ENCODE measurements at regions of chr16 and their contacts with region 1.

Region 1: GRCh38 chr16:87387942-87388817 is 4.0 kb upstream of the MAP1LC3B start:
- DNase-seq: peak; percentile 90 to 96 (median 96)
- ATAC-seq: peak; percentile 71 to 88 (median 82)
- H3K4me3 ChIP-seq: peak overlapping the region in 9 of 12 donors; percentile 22 to 42 (median 29)
- H3K27ac ChIP-seq: peak overlapping the region; percentile 80 to 96 (median 90)
- H3K4me1 ChIP-seq: peaks cover 6 to 45% (median 29%) of the 10 kb centered on the region in 12 donors
- H3K27me3 ChIP-seq: no peaks in the 10 kb centered on the region
- CTCF ChIP-seq: no peak
- POLR2A ChIP-seq: peak in 1 of 2 donors; percentile 66

Region 2: GRCh38 chr16:87316923-87317749 is 71.0 kb before region 1 on chr16 and contains the start of gene C16orf95:
- intact Hi-C with region 1: loop called in 9 of 10 experiments (anchors 1 to 5 kb)
- DNase-seq: peak; percentile 96 to 97 (median 97)
- ATAC-seq: peak; percentile 97 to 99 (median 98)
- H3K4me3 ChIP-seq: peak within 1 kb of the TSS; percentile 67 to 100 (median 85)
- H3K27ac ChIP-seq: peak within 1 kb of the TSS; percentile 79 to 97 (median 91)
- H3K4me1 ChIP-seq: peaks cover 0 to 15% (median 8%) of the 10 kb centered on the region in 12 donors
- H3K27me3 ChIP-seq: no peaks in the 10 kb centered on the region
- CTCF ChIP-seq: peak; percentile 37 to 77 (median 64)
- POLR2A ChIP-seq: peak; percentile 32 to 91
- total RNA-seq, gene C16orf95: 0.91 to 4.5 (median 3.3) TPM

Region 3: GRCh38 chr16:87540945-87541877 is 153.0 kb after region 1 on chr16:
- intact Hi-C with region 1: loop called in 1 of 10 experiments (anchors 5 kb)
- DNase-seq: peak; percentile 44 to 80 (median 70)
- ATAC-seq: peak; percentile 47 to 79 (median 65)
- H3K4me3 ChIP-seq: peak overlapping the region in 8 of 12 donors; percentile 11 to 48 (median 25)
- H3K27ac ChIP-seq: peak overlapping the region; percentile 34 to 69 (median 56)
- H3K4me1 ChIP-seq: peaks cover 0 to 26% (median 11%) of the 10 kb centered on the region in 12 donors
- H3K27me3 ChIP-seq: peaks cover 0 to 7% (median 0%) of the 10 kb centered on the region in 9 donors
- CTCF ChIP-seq: no peak
- POLR2A ChIP-seq: no peak

Region 4: GRCh38 chr16:87713451-87714229 is 325.5 kb after region 1 on chr16:
- intact Hi-C with region 1: no loop called
- DNase-seq: no peak
- ATAC-seq: no peak
- H3K4me3 ChIP-seq: no peak overlapping the region
- H3K27ac ChIP-seq: no peak overlapping the region
- H3K4me1 ChIP-seq: peaks cover 0 to 7% (median 0%) of the 10 kb centered on the region in 12 donors
- H3K27me3 ChIP-seq: no peaks in the 10 kb centered on the region
- CTCF ChIP-seq: no peak
- POLR2A ChIP-seq: no peak

Region 5: GRCh38 chr16:87765776-87766484 is 377.8 kb after region 1 on chr16 and contains the start of gene KLHDC4:
- intact Hi-C with region 1: loop called in 5 of 10 experiments (anchors 5 to 10 kb)
- DNase-seq: peak; percentile 89 to 93 (median 91)
- ATAC-seq: peak; percentile 81 to 96 (median 94)
- H3K4me3 ChIP-seq: peak within 1 kb of the TSS; percentile 81 to 97 (median 93)
- H3K27ac ChIP-seq: peak within 1 kb of the TSS; percentile 57 to 93 (median 84)
- H3K4me1 ChIP-seq: peaks cover 3 to 26% (median 9%) of the 10 kb centered on the region in 12 donors
- H3K27me3 ChIP-seq: peaks cover 0 to 4% (median 0%) of the 10 kb centered on the region in 9 donors
- CTCF ChIP-seq: no peak
- POLR2A ChIP-seq: peak in 1 of 2 donors; percentile 72
- total RNA-seq, gene KLHDC4: 6.8 to 19.2 (median 13.7) TPM